AG04449 (cell line): ENCODE measurements at regions of chr19 and their contacts with region 1.

Region 1: DNA sequence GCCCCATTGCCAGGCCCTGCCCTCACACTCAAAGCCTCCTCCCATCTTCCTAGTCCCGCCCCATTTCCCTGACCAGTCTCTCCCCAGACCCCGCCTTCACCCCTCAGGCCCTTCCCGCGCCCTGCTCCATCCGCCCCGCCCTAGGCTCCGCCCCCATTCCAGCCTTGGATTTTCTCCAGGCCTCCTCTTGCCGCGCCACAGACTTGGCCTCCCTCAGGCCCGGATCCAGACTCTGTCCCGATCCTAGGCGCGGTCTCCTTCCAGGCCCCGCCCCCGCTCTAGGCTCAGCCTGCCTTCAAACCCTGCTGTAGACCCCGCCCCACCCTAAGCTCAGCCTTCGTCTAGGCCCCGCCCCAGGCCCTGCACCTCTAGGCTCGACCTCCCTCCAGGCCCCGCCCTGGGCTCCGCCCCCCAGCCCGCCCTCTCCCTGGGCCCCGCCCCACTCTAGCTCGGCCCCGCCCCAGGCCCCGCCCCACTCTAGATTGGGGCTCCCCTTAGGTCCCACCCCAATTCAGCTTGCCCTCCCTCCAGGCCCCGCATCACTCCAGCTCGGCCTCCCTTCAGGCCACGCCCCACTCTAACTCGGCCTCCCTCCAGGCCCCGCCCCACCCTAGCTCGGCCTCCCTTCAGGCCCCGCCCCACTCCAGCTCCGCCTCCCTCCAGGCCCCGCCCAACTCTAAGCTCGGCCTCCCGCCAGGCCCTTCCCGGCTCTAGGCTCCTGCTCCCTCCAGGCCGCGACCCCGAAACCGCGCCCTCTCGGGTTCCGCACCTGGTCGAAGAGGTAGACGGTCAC is 18.5 kb downstream of the LMTK3 start:
- DNase-seq: peak; percentile 78
- H3K4me3 ChIP-seq: peak overlapping the region; percentile 76
- CTCF ChIP-seq: no peak

Region 2: DNA sequence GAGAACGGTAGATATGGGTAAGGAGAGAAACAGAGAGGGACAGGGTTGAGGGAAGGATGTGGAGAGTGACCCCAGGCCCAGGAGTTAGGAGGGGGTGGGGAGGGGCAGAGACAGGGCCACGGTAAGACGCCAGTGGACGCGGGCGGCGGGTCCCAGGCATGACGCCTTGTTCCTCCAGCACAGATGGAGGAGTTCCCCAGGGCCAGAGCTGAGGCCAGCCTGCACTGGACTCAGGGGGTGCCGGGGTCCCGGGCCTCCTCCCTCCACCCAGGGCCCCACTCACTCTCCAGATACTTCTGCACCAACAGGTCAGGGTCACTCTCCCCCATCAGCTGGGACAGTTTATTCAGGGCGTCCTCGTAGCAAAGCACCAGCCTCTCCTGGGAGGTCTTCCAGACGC is 189.8 kb before region 1 on chr19:
- CTCF ChIA-PET with region 1: no interaction called
- POLR2A ChIA-PET with region 1: no interaction called
- DNase-seq: no peak
- H3K4me3 ChIP-seq: no peak overlapping the region
- CTCF ChIP-seq: no peak

Region 3: DNA sequence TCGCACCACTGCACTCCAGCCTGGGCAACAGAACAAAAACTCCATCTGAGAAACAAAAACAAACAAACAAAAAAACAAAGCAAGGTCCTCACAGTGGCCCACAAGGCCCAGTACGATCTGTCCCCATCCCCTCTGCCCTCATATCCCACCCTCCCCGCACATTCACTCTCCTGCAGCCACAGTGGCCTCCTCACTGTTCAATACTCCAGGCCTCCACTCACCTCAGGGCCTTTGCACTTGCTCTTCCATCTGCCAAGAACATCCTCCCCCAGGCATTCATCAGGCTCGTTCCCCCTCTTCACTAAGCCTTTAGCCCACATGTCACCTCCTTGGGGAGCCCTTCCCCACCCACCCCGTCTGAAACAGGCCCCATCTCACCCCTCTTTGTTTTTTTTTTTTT is 134.0 kb before region 1 on chr19:
- CTCF ChIA-PET with region 1: no interaction called
- POLR2A ChIA-PET with region 1: no interaction called
- DNase-seq: no peak
- H3K4me3 ChIP-seq: no peak overlapping the region
- CTCF ChIP-seq: no peak

Region 4: DNA sequence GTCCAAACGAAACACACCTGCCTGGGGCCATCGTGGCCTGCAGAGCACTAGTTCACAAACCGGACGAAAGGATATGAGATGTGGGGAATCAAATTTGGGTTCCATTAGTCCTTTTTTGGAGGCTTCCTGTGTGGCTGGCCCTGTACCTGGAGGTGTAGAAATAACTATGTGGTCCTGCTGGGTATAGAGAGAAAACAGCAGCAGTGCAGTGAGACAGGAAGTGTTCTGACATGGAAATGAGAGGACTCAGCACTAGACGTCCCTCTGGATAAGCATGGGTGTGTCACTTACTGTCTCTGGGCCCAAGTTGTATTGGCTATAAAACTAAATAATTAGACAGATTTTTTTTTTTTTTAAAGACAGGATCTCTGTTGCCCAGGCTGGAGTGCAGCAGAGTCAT is 114.1 kb before region 1 on chr19:
- CTCF ChIA-PET with region 1: no interaction called
- POLR2A ChIA-PET with region 1: no interaction called
- DNase-seq: no peak
- H3K4me3 ChIP-seq: no peak overlapping the region
- CTCF ChIP-seq: no peak

Region 5: GRCh38 chr19:48445606-48446481 is 47.3 kb before region 1 on chr19 and contains the start of gene GRWD1:
- CTCF ChIA-PET with region 1: interaction called, 17 read pairs
- POLR2A ChIA-PET with region 1: no interaction called
- DNase-seq: peak; percentile 63
- H3K4me3 ChIP-seq: peak within 1 kb of the TSS; percentile 90
- CTCF ChIP-seq: no peak

Region 6: GRCh38 chr19:48480558-48481500 is 12.3 kb before region 1 on chr19:
- CTCF ChIA-PET with region 1: interaction called, 48 read pairs
- POLR2A ChIA-PET with region 1: interaction called, 3 read pairs
- DNase-seq: no peak
- H3K4me3 ChIP-seq: peak overlapping the region; percentile 42
- CTCF ChIP-seq: no peak

Region 7: GRCh38 chr19:48516536-48516935 is 23.4 kb after region 1 on chr19:
- CTCF ChIA-PET with region 1: no interaction called
- POLR2A ChIA-PET with region 1: no interaction called
- DNase-seq: no peak
- H3K4me3 ChIP-seq: no peak overlapping the region
- CTCF ChIP-seq: no peak

Region 8: GRCh38 chr19:48588670-48589399 is 95.7 kb after region 1 on chr19:
- CTCF ChIA-PET with region 1: interaction called, 392 read pairs
- POLR2A ChIA-PET with region 1: interaction called, 3 read pairs
- DNase-seq: no peak
- H3K4me3 ChIP-seq: peak overlapping the region; percentile 61
- CTCF ChIP-seq: peak; percentile 99

Region 9: GRCh38 chr19:48608798-48609263 is 115.7 kb after region 1 on chr19:
- CTCF ChIA-PET with region 1: interaction called, 32 read pairs
- POLR2A ChIA-PET with region 1: no interaction called
- DNase-seq: no peak
- H3K4me3 ChIP-seq: no peak overlapping the region
- CTCF ChIP-seq: peak; percentile 66